Pancreas (tissue), 10 donors: ENCODE measurements at regions of chr1 and their contacts with region 1.

Region 1: GRCh38 chr1:54413295-54413694 is 7.1 kb upstream of the SSBP3 start:
- DNase-seq: peak in 2 of 6 donors; percentile 27 to 59
- ATAC-seq: peak in 3 of 4 donors; percentile 48 to 58 (median 58)
- H3K4me3 ChIP-seq: no peak overlapping the region
- H3K27ac ChIP-seq: peak overlapping the region in 1 of 4 donors; percentile 4
- H3K4me1 ChIP-seq: peaks cover 0 to 1% (median 0%) of the 10 kb centered on the region in 3 donors
- H3K27me3 ChIP-seq: no peaks in the 10 kb centered on the region
- CTCF ChIP-seq: no peak

Region 2: DNA sequence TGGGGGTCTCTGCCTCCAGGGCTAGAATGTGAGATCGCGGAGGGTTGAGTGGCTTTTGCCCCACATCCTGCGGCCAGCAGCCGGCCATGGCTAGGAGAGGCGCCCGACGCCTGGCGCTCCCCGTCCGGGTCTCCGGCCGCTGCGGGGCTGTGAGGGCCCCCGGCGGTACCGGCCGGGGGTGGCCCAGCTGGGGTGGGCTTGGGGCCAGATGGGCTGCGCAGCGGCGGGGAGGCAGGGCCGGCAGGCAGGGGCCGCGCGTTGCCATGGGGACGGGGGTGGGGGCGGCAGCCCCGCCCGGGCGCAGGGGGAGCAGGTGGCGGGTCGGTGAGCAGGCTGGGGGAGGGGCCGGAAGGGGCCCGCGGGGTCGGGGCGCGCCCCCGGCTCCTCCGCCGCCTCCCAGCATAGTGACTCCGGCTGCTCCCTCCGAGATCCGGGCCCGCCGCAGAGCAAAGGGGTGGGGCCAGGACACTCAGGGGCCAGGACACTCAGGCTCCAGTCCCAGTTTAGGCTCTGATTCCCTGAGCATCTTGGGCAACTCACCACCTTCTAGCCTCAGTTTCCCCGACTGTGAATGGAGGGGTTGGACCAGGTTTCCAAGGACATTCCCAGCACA is 61.5 kb after region 1 on chr1:
- intact Hi-C with region 1: loop called in 2 of 3 experiments (anchors 5 to 10 kb)
- DNase-seq: no peak
- ATAC-seq: peak in 3 of 4 donors; percentile 57 to 71 (median 58)
- H3K4me3 ChIP-seq: peak overlapping the region in 2 of 4 donors; percentile 11 to 27
- H3K27ac ChIP-seq: no peak overlapping the region
- H3K4me1 ChIP-seq: no peaks in the 10 kb centered on the region
- H3K27me3 ChIP-seq: no peaks in the 10 kb centered on the region
- CTCF ChIP-seq: no peak